Activated naive CD4-positive, alpha-beta T cell treated with anti-CD3 and anti-CD28 coated beads for 36 hours (primary cell): ENCODE measurements at regions of chr22 and their contacts with region 1.

Region 1: GRCh38 chr22:30089655-30089974 is 9.4 kb downstream of the HORMAD2 start:
- DNase-seq: no peak
- H3K4me3 Mint-ChIP-seq: no peak overlapping the region
- H3K27ac Mint-ChIP-seq: no peak overlapping the region
- H3K4me1 Mint-ChIP-seq: peaks cover 10% of the 10 kb centered on the region
- H3K27me3 Mint-ChIP-seq: peaks cover 4% of the 10 kb centered on the region

Region 2: DNA sequence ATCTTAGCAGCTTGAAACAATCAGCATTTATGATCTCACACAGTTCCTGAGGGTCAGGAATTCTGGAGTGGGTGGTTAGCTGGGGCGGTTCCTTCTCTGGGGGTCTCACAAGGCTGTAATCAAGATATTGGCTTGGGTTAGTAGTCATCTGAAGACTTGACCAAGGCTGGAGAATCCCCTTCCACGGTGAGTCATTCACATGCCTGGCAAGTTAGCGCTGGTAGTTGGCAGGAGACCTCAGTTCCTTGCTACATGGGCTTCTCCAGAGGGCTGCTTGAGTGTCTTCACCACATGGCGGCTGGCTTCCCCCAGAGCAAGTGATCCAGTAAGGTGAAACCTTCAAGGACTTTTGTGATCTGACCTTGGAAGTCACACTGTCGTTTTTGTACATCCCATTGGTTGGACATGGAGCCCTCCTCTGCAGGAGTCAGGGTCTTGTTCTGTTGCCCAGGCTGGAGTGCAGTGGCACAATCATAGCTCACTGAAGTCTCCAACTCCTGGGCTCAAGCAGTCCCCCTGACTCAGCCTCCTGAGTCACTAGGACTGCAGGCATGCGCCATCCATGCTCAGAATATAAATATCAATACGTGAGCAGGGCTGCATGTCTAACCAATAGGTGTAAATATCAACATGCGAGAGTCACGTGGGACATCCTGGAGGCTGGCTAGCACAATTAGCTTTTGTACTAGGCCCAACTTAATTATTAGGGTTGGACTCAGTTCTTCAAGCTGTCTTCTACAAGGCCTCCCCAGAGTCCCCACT is 501.5 kb before region 1 on chr22:
- CTCF ChIA-PET with region 1: interaction called, 5 read pairs
- intact Hi-C with region 1: loop called (anchors 1 kb)
- DNase-seq: no peak
- H3K4me3 Mint-ChIP-seq: no peak overlapping the region
- H3K27ac Mint-ChIP-seq: no peak overlapping the region
- H3K4me1 Mint-ChIP-seq: peaks cover 8% of the 10 kb centered on the region
- H3K27me3 Mint-ChIP-seq: no peaks in the 10 kb centered on the region

Region 3: GRCh38 chr22:29635734-29636357 is 453.8 kb before region 1 on chr22:
- CTCF ChIA-PET with region 1: interaction called, 8 read pairs
- intact Hi-C with region 1: loop called (anchors 1 kb)
- DNase-seq: no peak
- H3K4me3 Mint-ChIP-seq: no peak overlapping the region
- H3K27ac Mint-ChIP-seq: no peak overlapping the region
- H3K4me1 Mint-ChIP-seq: peaks cover 21% of the 10 kb centered on the region
- H3K27me3 Mint-ChIP-seq: no peaks in the 10 kb centered on the region

Region 4: DNA sequence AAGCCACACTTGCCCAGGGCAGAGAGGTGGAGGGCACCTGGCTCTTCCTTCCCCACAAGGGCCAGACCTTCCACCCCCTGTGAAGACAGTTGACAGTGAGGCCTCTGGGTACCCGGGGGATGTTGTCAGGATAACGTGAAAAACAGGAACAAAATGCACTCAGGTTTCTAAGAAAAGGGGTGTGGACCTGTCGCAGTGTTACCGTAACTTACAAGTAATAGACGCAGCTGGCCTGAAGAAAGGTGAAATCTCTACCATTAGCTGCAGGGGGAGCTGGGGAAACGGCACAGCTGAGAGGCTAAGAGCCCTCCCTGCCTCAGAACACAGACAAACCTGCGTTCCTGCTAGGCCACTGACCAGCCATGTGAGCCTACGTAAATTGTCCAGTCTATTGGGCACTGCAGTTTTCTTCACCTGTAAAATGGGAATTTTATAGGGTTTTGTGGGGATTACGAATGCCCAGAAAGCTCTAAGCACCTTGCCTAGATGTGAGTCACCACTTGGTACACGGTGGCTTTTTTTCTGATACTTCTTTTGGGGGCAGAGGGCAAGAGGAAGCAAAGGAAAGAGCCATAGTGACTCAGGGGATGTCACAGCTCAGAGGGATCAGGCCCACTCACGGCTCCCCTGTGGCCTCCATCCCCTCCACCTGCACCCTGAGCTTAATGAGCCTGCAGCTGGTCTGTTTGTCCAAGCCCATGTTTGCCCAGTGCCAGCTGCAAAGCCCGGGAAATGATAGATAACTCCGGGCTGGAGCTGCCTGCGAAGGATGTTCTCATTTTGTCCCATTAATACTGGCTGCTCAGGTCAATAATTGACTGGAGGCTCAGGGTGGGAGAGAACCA is 388.2 kb before region 1 on chr22:
- CTCF ChIA-PET with region 1: no interaction called
- intact Hi-C with region 1: loop called (anchors 1 kb)
- DNase-seq: peak; percentile 61
- H3K4me3 Mint-ChIP-seq: no peak overlapping the region
- H3K27ac Mint-ChIP-seq: peak overlapping the region; percentile 7
- H3K4me1 Mint-ChIP-seq: peaks cover 20% of the 10 kb centered on the region
- H3K27me3 Mint-ChIP-seq: no peaks in the 10 kb centered on the region

Region 5: DNA sequence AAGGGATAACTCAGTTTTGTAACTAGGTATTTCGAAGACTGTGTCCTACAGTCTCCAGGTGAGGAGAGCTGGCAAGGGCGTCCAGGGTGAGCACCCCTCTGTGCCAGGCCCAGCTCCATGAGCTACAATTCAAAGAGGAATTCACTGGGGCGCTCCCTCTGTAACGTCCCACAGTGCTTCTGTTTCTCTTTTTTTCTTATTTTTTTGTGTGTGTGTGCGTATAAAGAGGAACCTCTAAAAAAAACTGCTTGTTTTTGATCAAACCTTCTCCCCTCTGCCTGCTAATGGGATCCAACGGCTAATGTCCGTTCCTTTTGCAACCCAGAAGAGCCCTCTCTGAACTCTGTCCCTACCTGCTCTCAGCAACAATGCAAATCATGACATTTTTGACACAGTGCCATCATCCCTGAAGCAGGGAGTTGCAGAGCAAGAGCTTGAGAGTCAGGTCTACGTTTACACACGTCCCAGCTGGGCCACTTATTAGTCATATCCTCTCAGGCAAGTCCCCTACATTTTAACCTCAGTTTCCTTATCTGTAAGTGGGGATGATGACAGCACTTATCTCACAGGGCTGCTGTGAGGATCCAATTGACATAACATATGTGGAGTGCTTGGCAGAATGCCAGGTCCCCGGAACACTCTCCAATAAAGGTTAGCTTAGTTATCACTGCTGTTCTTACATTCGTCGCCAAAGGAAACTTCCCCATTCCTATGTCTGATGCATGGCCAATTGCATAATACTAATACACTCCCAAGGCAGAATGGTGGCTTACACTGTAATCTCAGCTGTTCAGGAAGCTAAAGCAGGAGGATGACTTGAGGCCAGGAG is 268.4 kb before region 1 on chr22:
- CTCF ChIA-PET with region 1: no interaction called
- intact Hi-C with region 1: loop called (anchors 5 kb)
- DNase-seq: peak; percentile 86
- H3K4me3 Mint-ChIP-seq: no peak overlapping the region
- H3K27ac Mint-ChIP-seq: peak overlapping the region; percentile 83
- H3K4me1 Mint-ChIP-seq: peaks cover 15% of the 10 kb centered on the region
- H3K27me3 Mint-ChIP-seq: no peaks in the 10 kb centered on the region

Region 6: DNA sequence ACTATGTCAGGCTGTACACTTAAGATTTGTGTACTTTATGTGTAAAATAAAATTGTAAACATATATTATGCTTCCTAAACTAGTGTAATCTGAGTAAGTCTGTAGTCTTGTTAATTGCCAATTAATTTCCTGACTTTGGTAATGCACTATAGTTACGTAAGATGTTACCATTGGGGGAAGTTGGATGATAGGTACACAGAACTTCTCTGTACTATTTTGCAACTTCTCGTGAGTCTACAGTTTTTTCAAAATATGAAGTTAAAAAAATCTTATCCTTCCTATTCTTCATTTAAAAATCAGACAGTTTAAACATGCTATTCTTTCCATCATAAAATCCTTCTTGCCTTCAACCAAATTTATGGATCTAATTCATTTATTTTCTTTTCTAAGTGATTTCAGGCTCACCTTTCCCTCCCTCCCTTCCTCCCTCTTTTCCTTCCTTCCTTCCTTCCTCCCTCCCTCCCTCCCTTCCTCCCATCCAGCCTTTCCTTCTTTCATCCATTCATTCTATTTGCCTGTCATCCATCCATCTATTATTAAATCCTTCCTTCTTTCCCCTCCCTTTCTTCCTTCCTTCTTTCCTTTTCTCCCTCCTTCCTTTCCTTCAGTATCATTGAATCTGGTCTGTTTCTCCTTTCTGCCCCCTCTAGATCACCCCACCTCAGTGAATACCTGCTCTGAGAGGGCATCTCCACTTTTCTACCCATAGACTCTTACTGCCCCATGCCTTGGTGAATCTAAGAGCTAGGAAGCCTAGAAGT is 229.4 kb before region 1 on chr22:
- CTCF ChIA-PET with region 1: no interaction called
- intact Hi-C with region 1: no loop called
- DNase-seq: no peak
- H3K4me3 Mint-ChIP-seq: no peak overlapping the region
- H3K27ac Mint-ChIP-seq: no peak overlapping the region
- H3K4me1 Mint-ChIP-seq: no peaks in the 10 kb centered on the region
- H3K27me3 Mint-ChIP-seq: no peaks in the 10 kb centered on the region